Right ventricle myocardium superior (tissue), 1 donor: ENCODE measurements at regions of chr11 and their contacts with region 1.

Region 1: GRCh38 chr11:12963792-12964536 is 45.2 kb upstream of the RASSF10 start:
- DNase-seq: peak; percentile 65
- ATAC-seq: peak; percentile 92

Region 2: GRCh38 chr11:12888525-12889158 is 75.3 kb before region 1 on chr11:
- intact Hi-C with region 1: no loop called
- DNase-seq: peak; percentile 92
- ATAC-seq: peak; percentile 83

Region 3: GRCh38 chr11:13040969-13041561 is 77.1 kb after region 1 on chr11:
- intact Hi-C with region 1: no loop called
- DNase-seq: no peak
- ATAC-seq: no peak

Region 4: DNA sequence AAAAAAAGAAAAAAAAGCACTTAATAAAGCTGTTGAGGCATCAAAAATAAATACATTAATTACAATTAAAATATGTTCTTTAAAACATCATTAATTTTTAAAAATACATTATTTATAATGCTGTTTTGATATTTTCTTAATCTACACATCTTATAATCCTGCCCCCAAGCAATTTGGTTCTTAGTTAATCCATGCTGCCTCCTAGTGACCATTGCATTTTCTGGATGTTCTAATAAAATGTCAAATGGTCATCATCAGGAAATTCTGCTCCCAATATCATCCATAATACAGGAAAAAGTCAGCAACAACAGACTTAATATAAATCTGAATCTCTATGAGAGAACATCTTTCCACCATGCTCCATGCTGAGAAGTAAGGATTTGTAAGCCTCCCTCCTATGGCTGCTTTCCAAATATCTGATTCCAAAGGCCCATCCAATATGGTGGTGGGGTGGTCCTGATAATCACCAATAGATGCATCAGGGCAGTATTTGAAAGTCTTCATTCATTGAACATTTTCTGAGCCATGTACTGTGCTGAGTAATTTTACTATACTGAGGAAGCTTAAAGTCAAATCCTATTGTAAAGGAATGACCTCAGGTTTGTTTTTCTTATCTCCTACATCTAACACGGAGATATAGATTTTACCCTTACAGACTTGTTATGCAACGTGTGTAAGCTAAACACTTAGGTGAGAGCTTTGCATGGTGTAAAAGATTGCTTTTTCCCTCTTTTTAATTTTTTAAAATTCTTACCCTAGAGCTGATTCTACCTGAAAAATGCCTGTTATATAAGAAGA is 189.0 kb after region 1 on chr11:
- intact Hi-C with region 1: loop called (anchors 10 kb)
- DNase-seq: no peak
- ATAC-seq: no peak

Region 5: GRCh38 chr11:13183094-13183825 is 219.3 kb after region 1 on chr11:
- intact Hi-C with region 1: loop called (anchors 5 kb)
- DNase-seq: no peak
- ATAC-seq: peak; percentile 67

Region 6: GRCh38 chr11:13343931-13344717 is 380.2 kb after region 1 on chr11:
- intact Hi-C with region 1: loop called (anchors 5 kb)
- DNase-seq: peak; percentile 61
- ATAC-seq: peak; percentile 67